Prostate gland (tissue), 2 donors: ENCODE measurements at regions of chr11 and their contacts with region 1.

Region 1: DNA sequence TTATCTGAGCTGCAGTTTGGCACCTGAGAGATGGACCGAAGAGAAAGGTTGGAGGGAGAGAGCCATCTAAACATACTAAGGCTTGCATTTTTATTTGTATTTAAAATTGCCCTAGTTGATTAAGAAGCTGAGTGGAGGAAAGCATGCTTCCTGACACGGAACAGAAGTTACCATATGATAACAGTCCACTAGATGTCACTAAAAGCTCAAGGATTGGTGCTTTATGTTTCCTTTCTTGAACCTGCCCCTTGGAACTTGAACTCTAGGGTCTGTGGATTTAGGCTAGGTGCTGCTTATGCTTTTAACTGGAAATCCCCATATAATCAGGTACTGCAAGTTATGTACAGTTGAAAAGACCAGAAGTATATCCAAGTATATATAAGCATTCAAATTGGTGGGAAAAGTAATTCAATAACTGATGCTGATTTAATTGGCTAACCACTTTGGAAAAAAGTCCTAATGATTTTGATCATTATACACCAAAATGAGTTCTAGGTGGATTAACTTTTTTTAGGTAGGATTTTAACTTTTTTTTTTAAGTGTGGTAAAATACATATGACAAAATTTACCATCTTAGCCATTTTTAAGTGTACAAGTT is 9.5 kb downstream of the RBMXL2 start:
- DNase-seq: no peak
- H3K4me3 ChIP-seq: no peak overlapping the region
- H3K27ac ChIP-seq: no peak overlapping the region
- H3K4me1 ChIP-seq: no peaks in the 10 kb centered on the region
- H3K27me3 ChIP-seq: no peaks in the 10 kb centered on the region
- CTCF ChIP-seq: peak in 3 of 4 experiments; percentile 35 to 65 (median 58)
- POLR2A ChIP-seq: no peak

Region 2: GRCh38 chr11:6635082-6635932 is 463.0 kb before region 1 on chr11:
- intact Hi-C with region 1: no loop called
- DNase-seq: no peak
- H3K4me3 ChIP-seq: no peak overlapping the region
- H3K27ac ChIP-seq: no peak overlapping the region
- H3K4me1 ChIP-seq: no peaks in the 10 kb centered on the region
- H3K27me3 ChIP-seq: no peaks in the 10 kb centered on the region
- CTCF ChIP-seq: no peak
- POLR2A ChIP-seq: no peak

Region 3: GRCh38 chr11:7046474-7047175 is 51.7 kb before region 1 on chr11:
- intact Hi-C with region 1: no loop called
- DNase-seq: no peak
- H3K4me3 ChIP-seq: no peak overlapping the region
- H3K27ac ChIP-seq: no peak overlapping the region
- H3K4me1 ChIP-seq: no peaks in the 10 kb centered on the region
- H3K27me3 ChIP-seq: no peaks in the 10 kb centered on the region
- CTCF ChIP-seq: no peak
- POLR2A ChIP-seq: no peak

Region 4: GRCh38 chr11:7688238-7688826 is 590.0 kb after region 1 on chr11:
- intact Hi-C with region 1: loop called (anchors 10 kb)
- DNase-seq: no peak
- H3K4me3 ChIP-seq: no peak overlapping the region
- H3K27ac ChIP-seq: no peak overlapping the region
- H3K4me1 ChIP-seq: no peaks in the 10 kb centered on the region
- H3K27me3 ChIP-seq: no peaks in the 10 kb centered on the region
- CTCF ChIP-seq: peak; percentile 41 to 81 (median 73)
- POLR2A ChIP-seq: no peak